GM12878 (cell line): ENCODE measurements at regions of chr15 and their contacts with region 1.

Region 1: GRCh38 chr15:40044717-40045571 is 6.0 kb upstream of the SRP14 start:
- DNase-seq: no peak
- ATAC-seq: peak; percentile 86
- H3K4me3 ChIP-seq: no peak overlapping the region
- H3K27ac ChIP-seq: peak overlapping the region; percentile 92
- H3K4me1 ChIP-seq: peaks cover 67% of the 10 kb centered on the region
- H3K27me3 ChIP-seq: no peaks in the 10 kb centered on the region
- CTCF ChIP-seq: peak; percentile 97 to 100 (median 98); a peak in 5 of 6 replicates
- EP300 ChIP-seq: peak in 1 of 2 experiments; percentile 26; a peak in 1 of 4 replicates
- POLR2A ChIP-seq: no peak
- RAD21 ChIP-seq: peak; percentile 93

Region 2: GRCh38 chr15:40069178-40070165 is 24.5 kb after region 1 on chr15:
- CTCF ChIA-PET with region 1: interaction called, 9 read pairs
- POLR2A ChIA-PET with region 1: interaction called, 13 read pairs
- RAD21 ChIA-PET with region 1: interaction called, 151 read pairs
- SMC1A ChIA-PET with region 1: interaction called, 64 read pairs
- in situ Hi-C with region 1: no loop called
- intact Hi-C with region 1: loop called (anchors 2 kb)
- DNase-seq: no peak
- ATAC-seq: peak; percentile 88
- H3K4me3 ChIP-seq: no peak overlapping the region; the same call in 1 of the 2 replicates
- H3K27ac ChIP-seq: peak overlapping the region; percentile 66
- H3K4me1 ChIP-seq: peaks cover 36% of the 10 kb centered on the region
- H3K27me3 ChIP-seq: no peaks in the 10 kb centered on the region
- CTCF ChIP-seq: no peak
- EP300 ChIP-seq: no peak
- POLR2A ChIP-seq: peak; percentile 79
- RAD21 ChIP-seq: no peak

Region 3: GRCh38 chr15:40115670-40116093 is 70.7 kb after region 1 on chr15:
- CTCF ChIA-PET with region 1: interaction called, 15 read pairs
- POLR2A ChIA-PET with region 1: interaction called, 307 read pairs
- RAD21 ChIA-PET with region 1: interaction called, 903 read pairs
- SMC1A ChIA-PET with region 1: interaction called, 1,082 read pairs
- in situ Hi-C with region 1: no loop called
- intact Hi-C with region 1: no loop called
- DNase-seq: peak; percentile 83
- ATAC-seq: peak; percentile 97
- H3K4me3 ChIP-seq: no peak overlapping the region
- H3K27ac ChIP-seq: peak overlapping the region; percentile 69
- H3K4me1 ChIP-seq: peaks cover 30% of the 10 kb centered on the region
- H3K27me3 ChIP-seq: no peaks in the 10 kb centered on the region
- CTCF ChIP-seq: no peak
- EP300 ChIP-seq: peak; percentile 40 to 77; a peak in 3 of 4 replicates
- POLR2A ChIP-seq: peak; percentile 62
- RAD21 ChIP-seq: no peak

Region 4: GRCh38 chr15:40182358-40183029 is 137.6 kb after region 1 on chr15:
- CTCF ChIA-PET with region 1: interaction called, 31 read pairs
- POLR2A ChIA-PET with region 1: interaction called, 6 read pairs
- RAD21 ChIA-PET with region 1: interaction called, 56 read pairs
- SMC1A ChIA-PET with region 1: interaction called, 33 read pairs
- in situ Hi-C with region 1: no loop called
- intact Hi-C with region 1: loop called (anchors 5 kb)
- DNase-seq: no peak
- ATAC-seq: peak; percentile 73
- H3K4me3 ChIP-seq: no peak overlapping the region; the same call in 1 of the 2 replicates
- H3K27ac ChIP-seq: peak overlapping the region; percentile 39
- H3K4me1 ChIP-seq: peaks cover 19% of the 10 kb centered on the region
- H3K27me3 ChIP-seq: no peaks in the 10 kb centered on the region
- CTCF ChIP-seq: no peak
- EP300 ChIP-seq: no peak
- POLR2A ChIP-seq: no peak
- RAD21 ChIP-seq: no peak

Region 5: DNA sequence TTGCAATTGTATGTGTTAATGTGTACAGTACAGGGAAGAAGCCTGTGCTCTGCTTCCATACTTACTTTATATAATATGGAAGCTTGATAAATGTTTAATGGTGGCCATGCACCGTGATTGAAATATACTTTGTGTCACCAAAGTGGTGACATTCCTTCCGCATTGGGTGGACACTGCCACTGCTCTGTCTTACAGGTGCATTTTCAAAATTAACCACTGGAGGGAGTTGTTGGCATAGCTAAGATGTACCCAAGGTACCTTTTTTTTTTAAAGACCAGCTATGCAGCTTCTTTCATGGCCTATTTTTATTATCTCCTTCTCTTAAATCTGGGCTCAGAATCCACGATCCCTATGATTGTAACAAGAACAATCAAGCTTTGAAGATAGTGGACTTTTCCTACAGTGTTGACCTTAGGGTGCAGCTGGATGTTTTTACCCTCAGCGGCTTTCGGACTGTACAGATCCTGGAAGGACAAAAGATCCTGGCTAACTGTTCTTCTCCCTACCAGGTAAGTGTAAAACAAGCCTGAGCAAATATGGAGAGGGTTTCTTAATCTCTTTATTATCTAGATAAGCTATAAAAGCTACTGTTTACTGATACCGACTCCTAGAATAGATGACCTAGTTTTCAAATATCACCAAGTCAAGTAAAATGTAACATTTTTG is 172.3 kb after region 1 on chr15:
- CTCF ChIA-PET with region 1: interaction called, 81 read pairs
- POLR2A ChIA-PET with region 1: no interaction called
- RAD21 ChIA-PET with region 1: interaction called, 57 read pairs
- SMC1A ChIA-PET with region 1: interaction called, 58 read pairs
- in situ Hi-C with region 1: no loop called
- intact Hi-C with region 1: loop called (anchors 2 kb)
- DNase-seq: peak; percentile 26
- ATAC-seq: peak; percentile 95
- H3K4me3 ChIP-seq: no peak overlapping the region
- H3K27ac ChIP-seq: no peak overlapping the region
- H3K4me1 ChIP-seq: no peaks in the 10 kb centered on the region
- H3K27me3 ChIP-seq: no peaks in the 10 kb centered on the region
- CTCF ChIP-seq: peak; percentile 72 to 87 (median 82)
- EP300 ChIP-seq: no peak
- POLR2A ChIP-seq: no peak
- RAD21 ChIP-seq: peak; percentile 92